Activated naive CD4-positive, alpha-beta T cell treated with anti-CD3 and anti-CD28 coated beads, Interleukin-2, amount 10 ng/mL, durations not matched to agents 7 days and 5 days (primary cell): ENCODE measurements at regions of chr9 and their contacts with region 1.

Region 1: DNA sequence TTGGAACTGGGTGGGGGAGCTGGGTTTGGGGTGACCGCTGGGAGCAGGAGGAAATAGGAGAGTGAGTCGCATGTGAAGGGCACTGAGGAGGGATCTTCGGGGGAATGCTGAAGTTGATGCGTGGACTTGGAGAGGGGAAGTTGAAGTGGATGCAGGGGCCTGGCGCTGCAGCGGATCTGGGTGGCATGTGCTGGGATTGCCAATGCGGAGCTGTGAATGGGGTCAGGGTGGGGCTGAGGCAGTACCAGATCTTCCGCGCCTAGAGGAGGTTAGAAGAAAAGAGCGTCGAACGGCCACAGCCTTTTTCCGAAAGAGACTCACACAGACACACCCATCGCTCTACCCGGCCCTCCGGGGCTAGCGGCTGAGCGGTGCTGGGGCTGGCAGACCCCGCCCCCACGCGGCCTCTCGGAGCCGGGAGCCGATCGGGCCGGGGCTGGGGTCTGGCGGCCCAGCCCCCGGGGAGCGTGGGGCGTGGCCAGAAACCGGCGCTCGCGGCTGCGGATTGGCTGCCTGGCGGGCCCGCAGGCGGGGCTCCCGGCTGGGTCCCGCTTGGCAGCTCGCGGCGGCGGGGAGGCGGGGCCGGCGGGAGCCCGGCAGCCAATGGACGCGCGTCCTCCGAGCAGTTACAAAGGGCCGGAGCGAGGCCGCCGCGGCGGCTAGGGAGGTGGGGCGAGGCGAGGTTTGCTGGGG is at the start of gene TGFBR1:
- DNase-seq: peak; percentile 95
- H3K4me3 Mint-ChIP-seq: peak within 1 kb of the TSS; percentile 74
- H3K27ac Mint-ChIP-seq: peak within 1 kb of the TSS; percentile 90
- H3K4me1 Mint-ChIP-seq: peaks cover 68% of the 10 kb centered on the region
- H3K27me3 Mint-ChIP-seq: no peaks in the 10 kb centered on the region

Region 2: GRCh38 chr9:98838155-98838867 is 266.3 kb before region 1 on chr9:
- CTCF ChIA-PET with region 1: no interaction called
- DNase-seq: no peak
- H3K4me3 Mint-ChIP-seq: no peak overlapping the region
- H3K27ac Mint-ChIP-seq: no peak overlapping the region
- H3K4me1 Mint-ChIP-seq: no peaks in the 10 kb centered on the region
- H3K27me3 Mint-ChIP-seq: no peaks in the 10 kb centered on the region

Region 3: GRCh38 chr9:99057665-99058625 is 46.7 kb before region 1 on chr9:
- CTCF ChIA-PET with region 1: interaction called, 17 read pairs
- DNase-seq: peak; percentile 91
- H3K4me3 Mint-ChIP-seq: peak overlapping the region; percentile 74
- H3K27ac Mint-ChIP-seq: peak overlapping the region; percentile 93
- H3K4me1 Mint-ChIP-seq: peaks cover 75% of the 10 kb centered on the region
- H3K27me3 Mint-ChIP-seq: peaks cover 22% of the 10 kb centered on the region

Region 4: DNA sequence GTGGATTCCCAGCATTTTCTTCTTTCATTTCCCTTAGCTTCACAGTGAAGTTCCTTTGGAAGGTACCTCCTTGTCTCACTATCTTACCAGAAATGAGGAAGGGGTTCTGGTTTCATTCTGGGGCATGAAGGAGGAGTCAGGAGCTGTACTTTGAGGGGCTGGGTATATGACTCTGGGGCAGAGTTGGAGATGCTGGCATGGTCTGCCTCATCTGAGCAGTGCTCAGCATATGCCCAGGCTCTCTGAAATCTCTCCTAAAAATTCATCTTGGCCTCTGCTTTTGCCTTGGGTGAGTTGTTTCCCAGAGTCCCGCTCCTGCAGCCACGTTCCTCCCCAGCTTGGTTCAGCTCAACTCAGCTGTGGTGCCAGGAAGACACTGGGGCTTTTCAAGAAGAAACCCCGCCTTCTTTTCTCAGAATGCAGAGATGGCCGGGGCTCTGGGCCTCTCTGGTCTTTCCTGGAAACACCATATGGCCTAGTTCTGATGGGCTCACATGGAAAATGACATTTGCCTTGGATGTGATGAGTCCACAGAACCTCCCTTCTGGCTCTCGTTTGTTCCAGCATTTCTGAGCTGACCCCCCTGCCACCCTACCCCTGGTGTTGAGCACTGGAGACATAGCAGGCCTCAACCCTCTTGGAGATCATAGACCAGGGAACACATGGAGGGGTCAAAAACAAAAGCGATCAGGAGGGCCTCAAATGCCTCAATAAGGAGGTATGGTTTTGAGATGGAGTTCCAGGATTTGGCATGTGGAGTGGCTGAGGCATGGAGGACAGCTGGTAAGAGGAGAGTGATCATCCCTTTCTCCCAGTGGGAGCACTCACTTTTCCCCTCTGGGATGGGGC is 11.7 kb before region 1 on chr9:
- CTCF ChIA-PET with region 1: interaction called, 13 read pairs
- DNase-seq: peak; percentile 76
- H3K4me3 Mint-ChIP-seq: peak overlapping the region; percentile 37
- H3K27ac Mint-ChIP-seq: peak overlapping the region; percentile 94
- H3K4me1 Mint-ChIP-seq: peaks cover 70% of the 10 kb centered on the region
- H3K27me3 Mint-ChIP-seq: peaks cover 11% of the 10 kb centered on the region